MCF 10A (cell line): ENCODE measurements at regions of chr1 and their contacts with region 1.

Region 1: DNA sequence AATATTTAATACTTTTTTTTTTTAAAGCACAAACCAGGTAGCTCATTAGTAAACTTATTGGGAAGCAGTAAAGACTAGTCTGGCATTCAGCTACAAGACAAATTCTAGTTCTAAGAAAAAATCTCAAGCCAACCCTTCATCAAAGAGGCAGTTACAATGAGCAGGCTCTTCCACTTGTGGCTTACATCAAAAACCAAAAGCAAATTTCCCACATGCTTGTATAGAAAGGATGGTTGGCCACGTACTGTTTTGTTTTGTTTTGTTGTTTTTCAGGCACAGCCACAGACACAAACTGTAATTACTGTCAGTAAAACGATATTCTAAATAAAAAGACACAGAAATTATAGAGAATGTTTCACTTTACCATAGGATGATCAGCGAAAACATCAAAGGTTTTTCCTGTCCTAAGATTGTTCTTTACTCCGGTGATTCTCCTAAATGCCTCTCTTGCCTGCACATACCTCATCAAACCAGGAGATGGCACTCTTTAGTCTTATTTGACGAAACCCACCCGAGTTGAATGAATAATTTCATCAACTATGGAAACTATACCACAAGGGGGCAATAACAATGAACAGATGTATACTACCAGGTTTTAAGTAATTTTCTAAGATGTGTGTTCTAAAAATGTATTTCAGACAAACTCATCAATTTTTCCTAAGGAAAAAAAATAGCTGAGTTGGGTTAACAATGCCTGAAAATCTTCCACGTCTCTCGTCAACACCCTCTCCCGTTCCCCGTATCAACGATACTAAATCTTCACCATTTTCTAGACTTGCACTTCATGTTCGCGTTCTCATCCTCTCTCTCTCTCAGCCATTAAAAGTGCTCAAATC is 26.9 kb downstream of the RPL5 start:
- DNase-seq: peak; percentile 82
- H3K4me3 Mint-ChIP-seq: no peak overlapping the region
- H3K27ac Mint-ChIP-seq: no peak overlapping the region
- H3K4me1 Mint-ChIP-seq: peaks cover 7% of the 10 kb centered on the region
- H3K27me3 Mint-ChIP-seq: no peaks in the 10 kb centered on the region
- CTCF ChIP-seq: peak; percentile 88

Region 2: DNA sequence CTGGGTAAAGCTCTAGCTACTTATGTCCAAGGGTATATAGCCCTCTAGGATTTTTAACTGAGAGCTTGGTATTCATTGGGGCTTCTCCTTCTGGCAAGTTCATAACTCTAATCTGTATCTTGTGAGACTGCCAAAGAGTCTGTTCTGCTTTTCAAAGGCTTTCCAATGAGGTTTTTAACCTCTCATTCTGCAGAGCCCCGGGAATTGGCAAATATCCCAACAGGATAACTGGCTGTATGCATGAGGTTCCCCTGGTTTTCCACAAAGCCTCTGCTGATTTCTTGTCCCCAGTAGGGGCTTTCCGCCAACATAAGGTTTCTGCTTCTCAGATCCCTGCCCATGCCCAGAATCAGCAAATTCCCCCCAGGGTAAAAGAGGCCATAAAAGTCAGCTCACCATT is 13.9 kb after region 1 on chr1:
- CTCF ChIA-PET with region 1: interaction called, 22 read pairs
- POLR2A ChIA-PET with region 1: interaction called, 3 read pairs
- intact Hi-C with region 1: no loop called
- DNase-seq: no peak
- H3K4me3 Mint-ChIP-seq: no peak overlapping the region
- H3K27ac Mint-ChIP-seq: no peak overlapping the region
- H3K4me1 Mint-ChIP-seq: no peaks in the 10 kb centered on the region
- H3K27me3 Mint-ChIP-seq: no peaks in the 10 kb centered on the region
- CTCF ChIP-seq: no peak

Region 3: GRCh38 chr1:92951141-92951582 is 92.4 kb after region 1 on chr1:
- CTCF ChIA-PET with region 1: interaction called, 175 read pairs
- POLR2A ChIA-PET with region 1: interaction called, 3 read pairs
- intact Hi-C with region 1: no loop called
- DNase-seq: peak; percentile 62
- H3K4me3 Mint-ChIP-seq: no peak overlapping the region
- H3K27ac Mint-ChIP-seq: no peak overlapping the region
- H3K4me1 Mint-ChIP-seq: no peaks in the 10 kb centered on the region
- H3K27me3 Mint-ChIP-seq: no peaks in the 10 kb centered on the region
- CTCF ChIP-seq: no peak

Region 4: GRCh38 chr1:92968138-92969032 is 109.6 kb after region 1 on chr1:
- CTCF ChIA-PET with region 1: interaction called, 175 read pairs
- POLR2A ChIA-PET with region 1: interaction called, 13 read pairs
- intact Hi-C with region 1: no loop called
- DNase-seq: peak; percentile 45
- H3K4me3 Mint-ChIP-seq: no peak overlapping the region
- H3K27ac Mint-ChIP-seq: no peak overlapping the region
- H3K4me1 Mint-ChIP-seq: no peaks in the 10 kb centered on the region
- H3K27me3 Mint-ChIP-seq: no peaks in the 10 kb centered on the region
- CTCF ChIP-seq: peak; percentile 52

Region 5: DNA sequence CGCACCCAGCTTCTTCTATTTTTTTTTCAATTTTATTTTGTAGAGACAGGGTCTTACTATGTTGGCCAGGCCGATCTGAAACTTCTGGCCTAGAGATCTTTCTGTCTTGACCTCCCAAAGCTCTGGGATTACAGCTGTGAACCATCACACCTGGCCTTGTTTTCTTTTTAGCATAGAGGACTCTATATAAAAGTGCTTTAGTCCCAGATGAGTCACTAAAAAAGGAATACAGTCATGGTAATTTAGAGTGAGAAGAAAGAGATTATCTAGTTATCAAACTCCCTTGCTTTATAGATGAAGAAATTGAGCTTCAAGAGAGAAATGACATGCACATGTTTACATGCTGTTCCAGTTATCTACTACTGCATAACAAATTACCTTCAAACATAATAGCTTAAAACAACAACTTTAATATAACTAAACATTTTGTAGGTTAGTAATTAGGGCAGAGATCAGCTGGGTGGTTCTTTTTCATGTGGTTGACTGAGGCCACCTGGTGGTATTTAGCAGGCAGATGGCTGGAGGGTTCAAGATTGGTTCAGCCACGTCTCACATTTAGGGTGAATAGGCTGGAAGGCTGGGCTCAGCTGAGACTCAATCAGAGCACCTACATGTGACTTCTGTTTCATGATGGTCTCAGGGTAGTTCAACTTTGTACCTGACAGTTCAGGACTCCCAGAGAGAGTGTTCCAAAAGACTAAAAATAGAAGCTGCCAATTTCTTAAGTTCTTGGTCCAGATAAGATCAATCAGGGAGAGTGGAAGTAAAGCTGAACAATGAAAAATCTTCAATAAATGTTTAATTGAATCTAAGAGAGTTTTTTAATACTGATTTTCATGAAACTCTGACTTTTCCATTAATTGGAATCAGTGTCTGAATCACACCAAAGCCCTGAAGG is 203.4 kb after region 1 on chr1:
- CTCF ChIA-PET with region 1: interaction called, 10 read pairs
- POLR2A ChIA-PET with region 1: interaction called, 3 read pairs
- intact Hi-C with region 1: loop called (anchors 1 kb)
- DNase-seq: peak; percentile 62
- H3K4me3 Mint-ChIP-seq: no peak overlapping the region
- H3K27ac Mint-ChIP-seq: no peak overlapping the region
- H3K4me1 Mint-ChIP-seq: no peaks in the 10 kb centered on the region
- H3K27me3 Mint-ChIP-seq: peaks cover 65% of the 10 kb centered on the region
- CTCF ChIP-seq: peak; percentile 29

Region 6: DNA sequence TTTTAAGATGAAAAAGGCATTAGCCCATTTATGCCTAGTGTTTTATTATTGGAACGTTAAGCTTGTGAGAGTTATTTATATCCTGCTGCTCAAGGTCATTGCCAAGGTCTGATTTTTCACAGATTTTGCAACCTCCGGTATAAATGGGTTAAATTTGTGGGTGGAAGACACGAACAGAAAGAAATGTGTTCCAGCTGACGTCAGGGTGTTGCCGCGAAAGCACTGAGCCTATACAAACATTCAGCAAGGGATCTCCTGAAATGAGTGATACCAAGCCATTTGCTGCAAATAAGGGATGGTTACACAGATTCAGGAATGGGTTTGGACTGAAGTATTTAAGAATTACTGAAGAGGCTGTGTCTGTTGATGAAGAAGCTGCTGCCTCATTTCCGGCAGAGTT is 289.2 kb after region 1 on chr1:
- CTCF ChIA-PET with region 1: no interaction called
- POLR2A ChIA-PET with region 1: no interaction called
- intact Hi-C with region 1: no loop called
- DNase-seq: no peak
- H3K4me3 Mint-ChIP-seq: no peak overlapping the region
- H3K27ac Mint-ChIP-seq: no peak overlapping the region
- H3K4me1 Mint-ChIP-seq: peaks cover 4% of the 10 kb centered on the region
- H3K27me3 Mint-ChIP-seq: no peaks in the 10 kb centered on the region
- CTCF ChIP-seq: no peak